Breast epithelium (tissue), 4 donors: ENCODE measurements at regions of chr13 and their contacts with region 1.

Region 1: DNA sequence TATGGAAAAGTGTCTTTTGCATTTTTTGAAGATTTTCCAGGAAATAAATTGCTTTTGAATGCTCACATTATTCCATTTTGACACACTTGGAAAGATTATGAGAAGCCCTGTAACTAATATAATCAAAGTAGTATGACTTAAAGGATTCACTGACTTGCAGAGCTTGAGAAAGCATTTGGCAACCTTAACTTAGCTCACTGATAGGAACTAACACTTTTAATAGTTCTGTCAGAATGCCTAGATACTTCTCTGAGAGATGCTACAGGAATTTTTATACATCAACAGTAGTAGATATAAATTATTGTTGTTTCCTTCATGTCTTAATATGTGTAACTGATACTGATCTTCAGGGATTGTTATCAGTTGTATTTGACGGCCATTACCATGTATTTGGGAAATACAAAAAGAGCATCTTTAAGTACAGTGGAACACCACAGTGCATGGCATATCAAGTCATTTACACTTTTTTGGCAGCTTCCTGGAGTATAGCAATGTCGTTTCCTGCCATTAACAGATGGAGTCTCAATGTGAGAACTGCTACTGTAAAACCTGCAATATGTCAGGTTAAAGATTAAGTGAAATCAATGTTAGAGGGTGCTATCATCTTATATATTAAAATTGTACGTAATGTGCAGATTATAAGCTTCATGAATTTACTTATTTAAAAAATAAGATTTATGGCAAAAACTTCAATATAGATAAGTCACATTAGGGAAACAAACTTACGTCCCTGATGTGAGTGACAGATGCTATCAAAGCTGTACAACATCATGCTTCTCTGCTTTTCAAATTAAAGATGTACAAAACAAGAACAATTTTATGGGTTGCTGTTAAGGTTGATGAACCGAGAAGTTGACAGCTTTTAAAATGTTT is 1159.8 kb upstream of the MIR17HG start:
- DNase-seq: no peak
- H3K4me3 ChIP-seq: no peak overlapping the region
- H3K27ac ChIP-seq: no peak overlapping the region
- H3K4me1 ChIP-seq: no peaks in the 10 kb centered on the region
- H3K27me3 ChIP-seq: no peaks in the 10 kb centered on the region
- CTCF ChIP-seq: no peak
- POLR2A ChIP-seq: no peak

Region 2: DNA sequence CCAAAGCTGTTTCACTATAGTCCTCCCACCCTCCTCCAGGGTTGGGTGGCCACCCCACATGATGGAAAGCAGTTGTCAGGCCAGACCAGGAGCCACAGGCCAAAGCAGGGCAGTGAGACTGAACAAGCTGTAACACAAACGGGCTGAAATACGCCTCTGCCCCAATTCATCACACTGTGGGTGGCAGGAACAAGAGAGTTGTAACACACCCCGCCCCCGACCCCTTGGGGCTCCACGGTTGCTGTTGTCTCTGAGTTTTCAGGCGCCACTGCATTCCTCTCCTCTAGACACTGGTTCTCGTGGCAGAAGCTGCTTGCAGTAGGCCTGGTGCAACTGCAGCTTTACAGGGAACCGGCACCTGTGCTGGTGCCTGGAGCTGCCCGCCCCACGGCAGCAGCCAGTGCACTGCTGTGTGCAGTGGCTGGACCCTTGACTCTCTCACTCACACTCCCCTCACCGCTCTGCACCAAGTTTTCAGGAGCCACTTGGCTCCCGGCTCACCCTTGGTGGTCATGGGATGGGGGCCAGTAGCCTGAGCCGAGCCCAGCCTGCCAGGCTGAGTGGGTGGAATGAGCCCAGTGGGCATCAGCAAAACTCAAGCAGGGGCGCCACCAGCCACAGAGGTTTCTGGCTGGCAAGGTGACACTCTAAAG is 154.7 kb before region 1 on chr13:
- intact Hi-C with region 1: loop called (anchors 5 kb)
- DNase-seq: no peak
- H3K4me3 ChIP-seq: no peak overlapping the region
- H3K27ac ChIP-seq: no peak overlapping the region
- H3K4me1 ChIP-seq: no peaks in the 10 kb centered on the region
- H3K27me3 ChIP-seq: no peaks in the 10 kb centered on the region
- CTCF ChIP-seq: no peak
- POLR2A ChIP-seq: no peak

Region 3: GRCh38 chr13:90763476-90764150 is 575.9 kb after region 1 on chr13:
- intact Hi-C with region 1: loop called (anchors 5 kb)
- DNase-seq: no peak
- H3K4me3 ChIP-seq: no peak overlapping the region
- H3K27ac ChIP-seq: no peak overlapping the region
- H3K4me1 ChIP-seq: no peaks in the 10 kb centered on the region
- H3K27me3 ChIP-seq: no peaks in the 10 kb centered on the region
- CTCF ChIP-seq: no peak
- POLR2A ChIP-seq: no peak